ENCODE measurements at regions of chr17 and their contacts with region 1.

Region 1: DNA sequence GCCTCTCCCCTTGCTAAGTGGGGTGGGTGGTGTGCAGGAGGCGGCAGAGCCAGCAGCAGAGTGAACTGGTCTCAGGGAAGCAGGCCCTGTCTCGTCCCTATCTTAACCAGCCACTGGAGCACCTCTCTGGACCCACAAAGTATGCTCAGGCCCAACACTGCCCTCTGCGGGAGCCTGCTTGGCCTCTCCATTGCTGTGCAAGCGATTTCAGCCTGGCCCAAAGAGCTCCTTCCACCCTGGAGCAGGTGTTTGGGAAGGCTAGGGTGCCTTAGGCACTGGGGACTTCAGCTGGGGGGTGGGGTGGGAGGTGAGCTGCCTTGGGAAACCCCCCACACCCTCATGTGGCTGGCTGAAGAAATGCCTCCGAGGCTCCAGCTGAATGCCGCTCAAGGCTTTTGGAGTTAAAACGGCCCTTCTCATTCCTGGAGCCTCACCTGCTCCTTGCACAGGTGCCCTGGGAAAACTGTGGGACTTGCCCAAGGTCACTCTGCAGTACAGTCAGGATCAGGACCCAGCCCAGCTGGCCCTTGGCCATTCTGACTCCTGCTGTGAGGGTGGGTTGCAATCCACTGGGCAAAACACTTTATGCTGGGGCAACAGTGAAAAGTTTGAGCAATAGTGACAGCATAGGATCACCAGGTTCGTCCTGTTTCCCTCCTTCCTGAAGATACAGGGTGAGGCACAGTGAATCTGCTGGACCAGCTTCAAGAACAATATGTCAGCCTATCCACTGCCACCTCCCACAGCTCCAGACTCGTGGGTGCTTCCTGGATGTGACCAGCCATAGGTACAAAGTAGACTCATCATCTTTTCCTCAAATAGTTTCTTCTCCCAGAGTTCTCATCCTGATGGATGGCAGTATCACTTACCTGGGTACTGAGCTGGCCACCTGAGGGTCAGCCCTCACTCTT is 5.9 kb upstream of the UBE2O start:
- DNase-seq: no peak
- H3K4me3 ChIP-seq: no peak overlapping the region
- H3K27ac ChIP-seq: no peak overlapping the region
- H3K27me3 ChIP-seq: no peaks in the 10 kb centered on the region
- CTCF ChIP-seq: peak; percentile 82

Region 2: DNA sequence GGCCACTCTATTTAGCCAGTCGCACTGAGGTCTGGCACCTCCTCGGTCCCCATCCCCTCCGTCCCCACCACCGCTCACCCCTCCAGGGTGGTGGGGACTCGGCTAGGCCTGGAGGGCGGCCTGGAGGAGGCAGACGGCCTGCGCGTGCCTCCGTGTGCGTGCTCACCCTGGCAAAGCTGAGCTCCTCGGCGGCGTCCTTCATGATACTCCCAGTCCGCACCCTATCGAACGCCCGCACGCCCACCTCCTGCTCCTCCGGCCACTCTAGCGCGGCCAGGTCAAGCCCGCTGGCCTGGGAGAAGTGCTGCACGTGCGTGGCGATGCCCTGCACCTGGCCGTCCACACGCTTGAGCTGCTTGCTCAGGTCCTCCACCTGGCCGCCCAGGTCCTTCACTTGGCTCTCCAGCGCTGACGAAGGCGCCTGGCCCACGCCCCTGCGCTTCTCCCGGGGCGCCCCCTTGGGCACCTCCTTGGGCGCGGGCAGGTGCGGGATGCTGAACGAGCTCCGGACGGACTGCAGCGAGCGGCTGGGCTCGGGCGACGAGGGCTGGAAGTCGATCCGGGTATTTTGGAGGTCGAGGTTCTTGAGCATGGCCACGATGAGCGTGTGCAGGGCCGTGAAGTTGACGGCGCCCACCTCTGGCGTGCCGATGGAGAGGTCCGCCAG is 151.4 kb before region 1 on chr17:
- CTCF ChIA-PET with region 1: interaction called, 13 read pairs
- POLR2A ChIA-PET with region 1: no interaction called
- DNase-seq: no peak
- H3K4me3 ChIP-seq: no peak overlapping the region
- H3K27ac ChIP-seq: no peak overlapping the region
- H3K27me3 ChIP-seq: no peaks in the 10 kb centered on the region
- CTCF ChIP-seq: no peak

Region 3: GRCh38 chr17:76408052-76408849 is 50.6 kb before region 1 on chr17:
- CTCF ChIA-PET with region 1: interaction called, 78 read pairs
- POLR2A ChIA-PET with region 1: no interaction called
- DNase-seq: no peak
- H3K4me3 ChIP-seq: no peak overlapping the region
- H3K27ac ChIP-seq: no peak overlapping the region
- H3K27me3 ChIP-seq: no peaks in the 10 kb centered on the region
- CTCF ChIP-seq: peak; percentile 82

Region 4: GRCh38 chr17:76447931-76448652 is 10.7 kb before region 1 on chr17:
- CTCF ChIA-PET with region 1: interaction called, 18 read pairs
- POLR2A ChIA-PET with region 1: no interaction called
- DNase-seq: no peak
- H3K4me3 ChIP-seq: no peak overlapping the region
- H3K27ac ChIP-seq: no peak overlapping the region
- H3K27me3 ChIP-seq: no peaks in the 10 kb centered on the region
- CTCF ChIP-seq: no peak

Region 5: GRCh38 chr17:76506408-76507349 is 47.8 kb after region 1 on chr17:
- CTCF ChIA-PET with region 1: interaction called, 121 read pairs
- POLR2A ChIA-PET with region 1: interaction called, 6 read pairs
- DNase-seq: no peak
- H3K4me3 ChIP-seq: no peak overlapping the region
- H3K27ac ChIP-seq: no peak overlapping the region
- H3K27me3 ChIP-seq: peaks cover 5% of the 10 kb centered on the region
- CTCF ChIP-seq: peak; percentile 87

Region 6: GRCh38 chr17:76714822-76715495 is 256.1 kb after region 1 on chr17:
- CTCF ChIA-PET with region 1: no interaction called
- POLR2A ChIA-PET with region 1: no interaction called
- DNase-seq: no peak
- H3K4me3 ChIP-seq: no peak overlapping the region
- H3K27ac ChIP-seq: peak overlapping the region; percentile 98
- H3K27me3 ChIP-seq: no peaks in the 10 kb centered on the region
- CTCF ChIP-seq: peak; percentile 83

Measured in AG04450 (cell line).